ENCODE measurements at regions of chr1 and their contacts with region 1.

Region 1: DNA sequence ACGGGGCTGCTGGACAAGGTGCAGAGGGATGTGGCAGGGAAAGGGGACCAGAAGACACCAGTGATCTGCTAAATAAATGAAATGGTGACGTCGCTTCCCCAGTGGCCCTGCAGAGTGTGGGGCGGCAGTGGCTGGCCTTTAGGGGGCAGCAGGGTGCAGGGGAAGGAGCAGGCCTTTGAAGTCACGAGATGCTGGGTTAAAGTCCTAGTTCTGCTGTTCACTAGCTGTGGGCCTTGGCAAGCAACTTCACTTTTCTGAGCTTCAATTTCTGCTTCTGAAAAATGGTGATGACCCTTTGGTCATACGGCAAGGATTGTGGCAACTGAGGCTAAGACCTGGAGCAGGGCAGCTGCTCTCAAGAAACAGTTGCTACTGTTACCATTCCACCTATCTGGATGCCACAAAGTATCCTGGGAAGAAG is 9.2 kb upstream of the GALE start:
- DNase-seq: peak; percentile 75 to 89 (median 81)
- ATAC-seq: peak; percentile 97 to 98
- H3K4me3 Mint-ChIP-seq: peak overlapping the region in 1 of 10 donors; percentile 2
- H3K27ac Mint-ChIP-seq: peak overlapping the region in 6 of 10 donors; percentile 15 to 67 (median 47)
- H3K4me1 Mint-ChIP-seq: peaks cover 12 to 26% (median 18%) of the 10 kb centered on the region in 4 donors
- H3K27me3 Mint-ChIP-seq: no peaks in the 10 kb centered on the region

Region 2: DNA sequence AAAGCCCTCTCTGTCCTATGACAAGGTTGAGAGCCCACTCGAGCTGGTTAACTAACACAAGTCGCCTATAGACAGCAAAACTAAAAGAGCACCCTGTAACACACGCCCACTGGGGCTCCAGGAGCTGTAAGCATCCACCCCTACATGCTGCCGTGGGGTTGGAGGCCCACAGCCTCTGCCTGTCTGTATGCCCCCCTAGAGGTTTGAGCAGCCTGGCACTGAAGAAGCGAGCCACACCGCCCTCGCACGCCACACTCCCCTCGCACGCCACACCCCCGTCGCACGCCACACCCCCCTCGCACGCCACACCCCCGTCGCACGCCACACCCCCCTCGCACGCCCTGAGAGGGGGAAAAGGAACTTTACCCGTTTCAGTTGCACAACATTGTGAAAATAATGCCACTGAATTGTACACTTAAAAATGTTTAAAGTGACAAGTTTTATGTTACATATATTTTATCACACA is 28.7 kb after region 1 on chr1:
- POLR2A ChIA-PET with region 1: no interaction called
- DNase-seq: peak; percentile 75 to 91 (median 82)
- ATAC-seq: peak; percentile 100
- H3K4me3 Mint-ChIP-seq: peak overlapping the region; percentile 69 to 88 (median 80)
- H3K27ac Mint-ChIP-seq: peak overlapping the region in 9 of 10 donors; percentile 18 to 82 (median 72)
- H3K4me1 Mint-ChIP-seq: peaks cover 6 to 13% (median 11%) of the 10 kb centered on the region in 4 donors
- H3K27me3 Mint-ChIP-seq: peaks cover 0 to 2% (median 0%) of the 10 kb centered on the region in 5 donors

Region 3: GRCh38 chr1:23916209-23917131 is 106.7 kb after region 1 on chr1:
- POLR2A ChIA-PET with region 1: interaction called, 12 read pairs
- DNase-seq: peak; percentile 38 to 83 (median 66)
- ATAC-seq: peak; percentile 96 to 97
- H3K4me3 Mint-ChIP-seq: peak overlapping the region in 1 of 10 donors; percentile 32
- H3K27ac Mint-ChIP-seq: peak overlapping the region in 3 of 10 donors; percentile 17 to 79 (median 75)
- H3K4me1 Mint-ChIP-seq: peaks cover 23 to 62% (median 32%) of the 10 kb centered on the region in 4 donors
- H3K27me3 Mint-ChIP-seq: no peaks in the 10 kb centered on the region